CD4-positive, alpha-beta memory T cell (primary cell): ENCODE measurements at regions of chr20 and their contacts with region 1.

Region 1: GRCh38 chr20:5222919-5223634 is 93.7 kb downstream of the PROKR2 start:
- DNase-seq: peak; percentile 33 to 53 (median 42)
- H3K4me3 ChIP-seq: no peak overlapping the region
- H3K4me3 Mint-ChIP-seq: no peak overlapping the region
- H3K27ac ChIP-seq: no peak overlapping the region
- H3K27ac Mint-ChIP-seq: no peak overlapping the region
- H3K4me1 ChIP-seq: no peaks in the 10 kb centered on the region
- H3K4me1 Mint-ChIP-seq: peaks cover 0 to 7% (median 2%) of the 10 kb centered on the region in 4 donors
- H3K27me3 ChIP-seq: no peaks in the 10 kb centered on the region
- H3K27me3 Mint-ChIP-seq: peaks cover 0 to 2% of the 10 kb centered on the region in 2 donors

Region 2: GRCh38 chr20:4601630-4602296 is 621.3 kb before region 1 on chr20:
- CTCF ChIA-PET with region 1: no interaction called
- POLR2A ChIA-PET with region 1: no interaction called
- intact Hi-C with region 1: loop called (anchors 5 kb)
- DNase-seq: peak in 1 of 5 donors; percentile 26
- H3K4me3 ChIP-seq: no peak overlapping the region
- H3K4me3 Mint-ChIP-seq: no peak overlapping the region
- H3K27ac ChIP-seq: no peak overlapping the region
- H3K27ac Mint-ChIP-seq: no peak overlapping the region
- H3K4me1 ChIP-seq: no peaks in the 10 kb centered on the region
- H3K4me1 Mint-ChIP-seq: no peaks in the 10 kb centered on the region
- H3K27me3 ChIP-seq: peaks cover 5% of the 10 kb centered on the region
- H3K27me3 Mint-ChIP-seq: peaks cover 15 to 30% of the 10 kb centered on the region in 2 donors

Region 3: GRCh38 chr20:5205348-5206210 is 17.5 kb before region 1 on chr20:
- CTCF ChIA-PET with region 1: interaction called, 38 read pairs
- POLR2A ChIA-PET with region 1: no interaction called
- intact Hi-C with region 1: loop called (anchors 1 kb)
- DNase-seq: peak; percentile 49 to 64 (median 56)
- H3K4me3 ChIP-seq: no peak overlapping the region
- H3K4me3 Mint-ChIP-seq: no peak overlapping the region
- H3K27ac ChIP-seq: no peak overlapping the region
- H3K27ac Mint-ChIP-seq: peak overlapping the region in 1 of 7 donors; percentile 74
- H3K4me1 ChIP-seq: no peaks in the 10 kb centered on the region
- H3K4me1 Mint-ChIP-seq: peaks cover 0 to 6% (median 0%) of the 10 kb centered on the region in 4 donors
- H3K27me3 ChIP-seq: no peaks in the 10 kb centered on the region
- H3K27me3 Mint-ChIP-seq: no peaks in the 10 kb centered on the region

Region 4: DNA sequence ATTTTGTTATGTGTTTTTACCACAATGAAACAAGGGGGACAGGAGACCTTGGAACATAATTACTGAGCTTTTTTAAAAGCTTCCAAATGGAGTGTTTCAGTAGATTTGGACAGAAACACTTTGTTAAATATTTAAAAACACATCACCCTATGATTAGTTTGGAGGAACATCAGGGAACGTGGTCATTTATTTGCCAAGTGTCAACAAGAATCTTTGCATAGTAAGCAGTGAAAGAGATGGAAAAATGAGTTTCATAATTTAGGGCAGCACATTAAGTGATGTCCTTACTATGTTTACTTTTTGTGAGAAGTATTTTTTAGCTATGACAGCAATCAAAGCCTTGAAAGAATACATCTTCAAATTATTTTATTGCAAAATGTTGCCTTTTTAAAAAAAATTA is 11.1 kb after region 1 on chr20:
- CTCF ChIA-PET with region 1: interaction called, 13 read pairs
- POLR2A ChIA-PET with region 1: no interaction called
- intact Hi-C with region 1: no loop called
- DNase-seq: no peak
- H3K4me3 ChIP-seq: no peak overlapping the region
- H3K4me3 Mint-ChIP-seq: no peak overlapping the region
- H3K27ac ChIP-seq: no peak overlapping the region
- H3K27ac Mint-ChIP-seq: no peak overlapping the region
- H3K4me1 ChIP-seq: no peaks in the 10 kb centered on the region
- H3K4me1 Mint-ChIP-seq: peaks cover 3 to 5% (median 4%) of the 10 kb centered on the region in 4 donors
- H3K27me3 ChIP-seq: no peaks in the 10 kb centered on the region
- H3K27me3 Mint-ChIP-seq: peaks cover 15 to 29% of the 10 kb centered on the region in 2 donors

Region 5: GRCh38 chr20:5353624-5354496 is 130.8 kb after region 1 on chr20:
- CTCF ChIA-PET with region 1: no interaction called
- POLR2A ChIA-PET with region 1: no interaction called
- intact Hi-C with region 1: no loop called
- DNase-seq: no peak
- H3K4me3 ChIP-seq: no peak overlapping the region
- H3K4me3 Mint-ChIP-seq: no peak overlapping the region
- H3K27ac ChIP-seq: no peak overlapping the region
- H3K27ac Mint-ChIP-seq: no peak overlapping the region
- H3K4me1 ChIP-seq: no peaks in the 10 kb centered on the region
- H3K4me1 Mint-ChIP-seq: no peaks in the 10 kb centered on the region
- H3K27me3 ChIP-seq: no peaks in the 10 kb centered on the region
- H3K27me3 Mint-ChIP-seq: peaks cover 3 to 9% of the 10 kb centered on the region in 2 donors